ENCODE measurements at regions of chr4 and their contacts with region 1.

Region 1: DNA sequence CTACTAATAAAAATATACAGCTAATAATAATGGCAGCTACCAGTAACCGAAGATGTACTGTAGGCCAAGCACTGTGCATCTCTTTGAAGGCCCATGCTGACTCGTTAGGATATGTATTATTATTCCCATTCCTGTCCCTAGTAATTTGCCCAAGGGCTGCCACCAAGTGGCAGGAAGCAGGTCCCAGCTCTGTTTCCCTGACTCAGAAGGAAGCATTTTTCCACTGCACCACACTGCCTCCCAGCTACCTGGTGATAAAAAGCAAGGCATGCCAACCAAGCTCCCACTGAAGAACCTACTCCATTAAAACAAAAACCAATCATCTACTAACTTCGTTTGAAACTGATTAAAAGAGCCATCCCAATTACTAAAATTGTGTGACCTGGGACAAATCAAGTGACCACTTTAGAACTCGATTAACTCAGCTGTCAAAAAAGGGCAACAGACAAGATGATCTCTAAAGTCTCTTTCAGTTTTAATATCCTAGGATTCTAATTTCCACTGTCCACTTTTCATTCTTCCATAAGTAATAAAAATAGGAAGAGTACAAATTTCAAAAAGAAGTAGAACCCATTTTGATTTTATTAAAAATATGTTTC is 24.3 kb upstream of the PGM2 start:
- DNase-seq: peak in 4 of 6 donors; percentile 55 to 77 (median 60)
- ATAC-seq: peak; percentile 97 to 99 (median 98)
- H3K4me3 ChIP-seq: no peak overlapping the region
- H3K27ac ChIP-seq: no peak overlapping the region
- H3K4me1 ChIP-seq: no peaks in the 10 kb centered on the region
- H3K27me3 ChIP-seq: no peaks in the 10 kb centered on the region
- CTCF ChIP-seq: peak in 2 of 4 donors; percentile 47 to 59

Region 2: GRCh38 chr4:37936889-37937498 is 134.8 kb after region 1 on chr4:
- intact Hi-C with region 1: no loop called
- DNase-seq: no peak
- ATAC-seq: peak in 3 of 4 donors; percentile 35 to 61 (median 59)
- H3K4me3 ChIP-seq: no peak overlapping the region
- H3K27ac ChIP-seq: no peak overlapping the region
- H3K4me1 ChIP-seq: no peaks in the 10 kb centered on the region
- H3K27me3 ChIP-seq: no peaks in the 10 kb centered on the region
- CTCF ChIP-seq: no peak

Region 3: GRCh38 chr4:38034986-38035882 is 233.1 kb after region 1 on chr4:
- intact Hi-C with region 1: loop called in 2 of 3 experiments (anchors 2 to 5 kb)
- DNase-seq: peak in 1 of 6 donors; percentile 40
- ATAC-seq: peak in 3 of 4 donors; percentile 76 to 84 (median 82)
- H3K4me3 ChIP-seq: no peak overlapping the region
- H3K27ac ChIP-seq: no peak overlapping the region
- H3K4me1 ChIP-seq: no peaks in the 10 kb centered on the region
- H3K27me3 ChIP-seq: no peaks in the 10 kb centered on the region
- CTCF ChIP-seq: peak; percentile 25 to 39 (median 31)

Measured in pancreas (tissue), 10 donors.